Ovary (tissue), 10 donors: ENCODE measurements at regions of chr2 and their contacts with region 1.

Region 1: DNA sequence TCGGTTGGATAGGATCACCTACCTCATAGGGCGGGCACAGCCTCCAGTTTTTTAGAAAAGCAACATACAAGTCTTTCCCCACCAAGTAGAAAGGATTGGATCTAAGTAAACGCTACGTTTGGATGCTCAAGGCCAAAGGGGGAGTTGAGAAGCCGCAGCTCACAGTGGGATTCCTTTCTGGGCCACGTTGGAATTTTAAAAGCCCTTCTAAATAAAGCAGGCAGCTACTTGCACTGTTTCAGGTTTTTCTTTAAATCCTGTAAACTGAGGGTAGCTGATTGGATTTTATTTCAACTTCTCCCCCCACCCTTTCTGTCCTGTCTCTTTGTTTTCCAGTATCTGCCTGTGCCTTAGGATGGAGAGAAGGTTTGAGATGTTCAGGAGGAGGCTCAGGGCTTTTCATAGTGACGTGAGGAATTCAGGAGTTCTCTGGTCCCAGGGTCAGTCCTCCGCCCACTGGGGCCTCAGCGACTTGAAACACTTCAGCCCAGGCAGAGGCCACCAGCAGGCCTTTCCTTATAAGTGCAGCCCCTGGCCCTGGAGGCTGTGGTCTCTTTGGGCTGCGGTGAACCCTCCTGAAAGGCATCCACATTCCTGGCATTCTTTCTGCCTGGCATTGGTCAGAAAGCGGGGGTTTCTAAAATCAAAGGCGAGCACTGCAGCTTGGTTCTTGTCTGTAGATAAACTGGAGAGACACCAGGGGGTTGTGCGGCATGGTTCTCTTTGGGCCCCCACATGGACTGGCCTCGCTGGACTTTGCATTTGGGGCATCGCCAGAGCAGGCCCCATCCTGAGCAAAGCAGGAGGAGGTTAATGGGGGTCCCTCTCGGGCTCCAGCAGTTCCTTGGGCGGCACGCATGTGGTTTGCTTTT is 44.5 kb downstream of the SH3BP4 start:
- DNase-seq: no peak
- H3K4me3 ChIP-seq: no peak overlapping the region
- H3K27ac ChIP-seq: peak overlapping the region; percentile 48 to 71
- H3K4me1 ChIP-seq: peaks cover 38% of the 10 kb centered on the region
- H3K27me3 ChIP-seq: no peaks in the 10 kb centered on the region
- CTCF ChIP-seq: no peak
- EP300 ChIP-seq: no peak
- POLR2A ChIP-seq: no peak

Region 2: GRCh38 chr2:234571620-234572407 is 424.5 kb before region 1 on chr2:
- intact Hi-C with region 1: no loop called
- DNase-seq: no peak
- H3K4me3 ChIP-seq: no peak overlapping the region
- H3K27ac ChIP-seq: no peak overlapping the region
- H3K4me1 ChIP-seq: no peaks in the 10 kb centered on the region
- H3K27me3 ChIP-seq: no peaks in the 10 kb centered on the region
- CTCF ChIP-seq: no peak
- EP300 ChIP-seq: no peak
- POLR2A ChIP-seq: no peak

Region 3: GRCh38 chr2:234823877-234824376 is 172.4 kb before region 1 on chr2:
- intact Hi-C with region 1: no loop called
- DNase-seq: peak in 2 of 5 donors; percentile 27 to 40
- H3K4me3 ChIP-seq: no peak overlapping the region
- H3K27ac ChIP-seq: no peak overlapping the region
- H3K4me1 ChIP-seq: peaks cover 7% of the 10 kb centered on the region
- H3K27me3 ChIP-seq: no peaks in the 10 kb centered on the region
- CTCF ChIP-seq: no peak
- EP300 ChIP-seq: no peak
- POLR2A ChIP-seq: no peak

Region 4: GRCh38 chr2:234951664-234952269 is 44.5 kb before region 1 on chr2 and contains the start of gene SH3BP4:
- intact Hi-C with region 1: loop called in 1 of 4 experiments (anchors 5 kb)
- DNase-seq: peak; percentile 84 to 91 (median 87)
- H3K4me3 ChIP-seq: peak within 1 kb of the TSS; percentile 79
- H3K27ac ChIP-seq: peak within 1 kb of the TSS; percentile 58 to 70
- H3K4me1 ChIP-seq: peaks cover 16% of the 10 kb centered on the region
- H3K27me3 ChIP-seq: no peaks in the 10 kb centered on the region
- CTCF ChIP-seq: no peak
- EP300 ChIP-seq: no peak
- POLR2A ChIP-seq: no peak
- total RNA-seq, gene SH3BP4: 21.2 to 44.9 (median 37.4) TPM

Region 5: GRCh38 chr2:234963773-234964615 is 32.3 kb before region 1 on chr2:
- intact Hi-C with region 1: no loop called
- DNase-seq: peak in 1 of 5 donors; percentile 11
- H3K4me3 ChIP-seq: no peak overlapping the region
- H3K27ac ChIP-seq: no peak overlapping the region
- H3K4me1 ChIP-seq: peaks cover 6% of the 10 kb centered on the region
- H3K27me3 ChIP-seq: no peaks in the 10 kb centered on the region
- CTCF ChIP-seq: no peak
- EP300 ChIP-seq: no peak
- POLR2A ChIP-seq: no peak